Heart right ventricle (tissue), 16 donors: ENCODE measurements at regions of chr6 and their contacts with region 1.

Region 1: GRCh38 chr6:152220786-152221185 is 413.3 kb downstream of the ESR1 start:
- DNase-seq: peak in 1 of 2 donors; percentile 56
- ATAC-seq: peak; percentile 85 to 96 (median 92)
- H3K4me3 ChIP-seq: no peak overlapping the region
- H3K27ac ChIP-seq: peak overlapping the region in 9 of 10 donors; percentile 15 to 79 (median 64)
- H3K4me1 ChIP-seq: peaks cover 0 to 23% (median 10%) of the 10 kb centered on the region in 9 donors
- H3K27me3 ChIP-seq: no peaks in the 10 kb centered on the region
- CTCF ChIP-seq: no peak

Region 2: DNA sequence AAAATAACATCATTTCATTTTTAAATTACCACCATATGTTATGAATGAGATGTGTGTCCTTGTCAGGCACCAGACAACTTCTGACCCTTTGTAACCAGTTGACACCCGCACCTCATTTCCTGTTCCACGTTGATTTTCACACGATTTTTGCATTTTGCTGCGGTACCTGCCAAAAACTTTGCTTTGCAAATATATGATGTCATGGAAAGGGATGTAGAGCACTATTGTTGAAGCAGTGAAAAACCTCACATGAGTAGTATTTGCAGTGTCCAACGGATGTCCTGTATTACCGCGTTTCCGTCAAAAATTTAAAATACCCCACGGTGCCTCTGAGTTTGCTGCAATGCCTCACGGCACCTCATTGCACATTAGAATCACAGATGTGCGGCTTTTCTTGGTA is 1239.7 kb before region 1 on chr6:
- intact Hi-C with region 1: loop called in 1 of 10 experiments (anchors 10 kb)
- DNase-seq: peak in 1 of 2 donors; percentile 34
- ATAC-seq: peak in 7 of 8 donors; percentile 65 to 97 (median 92)
- H3K4me3 ChIP-seq: no peak overlapping the region
- H3K27ac ChIP-seq: peak overlapping the region in 2 of 10 donors; percentile 13 to 42
- H3K4me1 ChIP-seq: peaks cover 0 to 18% (median 0%) of the 10 kb centered on the region in 9 donors
- H3K27me3 ChIP-seq: no peaks in the 10 kb centered on the region
- CTCF ChIP-seq: no peak

Region 3: GRCh38 chr6:152151920-152152319 is 68.9 kb before region 1 on chr6:
- intact Hi-C with region 1: loop called in 1 of 10 experiments (anchors 10 kb)
- DNase-seq: no peak
- ATAC-seq: no peak
- H3K4me3 ChIP-seq: no peak overlapping the region
- H3K27ac ChIP-seq: no peak overlapping the region
- H3K4me1 ChIP-seq: peaks cover 0 to 14% (median 7%) of the 10 kb centered on the region in 9 donors
- H3K27me3 ChIP-seq: no peaks in the 10 kb centered on the region
- CTCF ChIP-seq: no peak

Region 4: DNA sequence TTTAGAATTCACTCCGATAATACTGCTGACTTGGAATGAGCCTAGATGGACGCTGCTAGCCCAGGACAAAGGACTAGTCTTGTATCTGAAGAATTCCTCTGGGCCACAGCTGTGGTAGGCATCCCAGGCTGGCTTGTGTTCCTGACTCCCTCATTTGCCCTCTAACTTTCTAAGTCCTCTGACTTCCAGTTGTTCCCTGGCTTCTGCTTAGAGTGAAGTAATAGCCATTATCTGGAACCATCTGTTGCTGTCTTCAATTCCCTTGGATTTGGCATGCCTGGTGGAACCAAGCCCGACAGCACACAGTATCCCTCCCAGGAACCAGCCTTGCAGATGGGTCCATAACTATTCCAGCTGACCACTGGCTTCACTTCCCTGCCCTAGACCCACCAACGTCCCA is 40.4 kb after region 1 on chr6:
- intact Hi-C with region 1: loop called in 2 of 10 experiments (anchors 5 to 10 kb)
- DNase-seq: no peak
- ATAC-seq: peak; percentile 46 to 80 (median 76)
- H3K4me3 ChIP-seq: no peak overlapping the region
- H3K27ac ChIP-seq: peak overlapping the region in 9 of 10 donors; percentile 30 to 71 (median 50)
- H3K4me1 ChIP-seq: peaks cover 0 to 26% (median 19%) of the 10 kb centered on the region in 9 donors
- H3K27me3 ChIP-seq: no peaks in the 10 kb centered on the region
- CTCF ChIP-seq: no peak

Region 5: GRCh38 chr6:152356451-152357061 is 135.8 kb after region 1 on chr6:
- intact Hi-C with region 1: loop called in 1 of 10 experiments (anchors 10 kb)
- DNase-seq: no peak
- ATAC-seq: peak in 4 of 8 donors; percentile 25 to 63 (median 53)
- H3K4me3 ChIP-seq: no peak overlapping the region
- H3K27ac ChIP-seq: no peak overlapping the region
- H3K4me1 ChIP-seq: peaks cover 0 to 14% (median 4%) of the 10 kb centered on the region in 9 donors
- H3K27me3 ChIP-seq: no peaks in the 10 kb centered on the region
- CTCF ChIP-seq: peak in 8 of 9 donors; percentile 4 to 47 (median 37)

Region 6: DNA sequence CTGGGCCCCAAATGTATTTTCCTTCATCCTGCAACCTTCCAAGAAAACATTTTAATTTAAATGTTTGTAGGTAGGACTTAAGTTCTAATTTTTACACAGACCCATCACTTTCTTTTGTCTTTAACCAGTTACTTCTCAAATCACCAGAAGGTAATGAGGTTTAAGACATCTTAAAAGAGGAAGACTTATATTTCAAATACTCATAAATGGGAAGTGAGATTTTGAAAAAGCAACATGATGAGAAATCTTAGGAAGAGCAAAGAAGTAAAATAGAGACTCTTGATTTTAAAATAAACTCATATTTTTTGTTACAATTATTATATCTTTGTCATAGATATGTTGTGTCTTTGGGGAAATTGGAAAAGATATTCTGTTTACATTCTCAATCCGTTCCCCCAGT is 334.1 kb after region 1 on chr6:
- intact Hi-C with region 1: no loop called
- DNase-seq: no peak
- ATAC-seq: no peak
- H3K4me3 ChIP-seq: no peak overlapping the region
- H3K27ac ChIP-seq: no peak overlapping the region
- H3K4me1 ChIP-seq: peaks cover 0 to 10% (median 0%) of the 10 kb centered on the region in 9 donors
- H3K27me3 ChIP-seq: no peaks in the 10 kb centered on the region
- CTCF ChIP-seq: no peak